ENCODE measurements at regions of chr22 and their contacts with region 1.

Region 1: DNA sequence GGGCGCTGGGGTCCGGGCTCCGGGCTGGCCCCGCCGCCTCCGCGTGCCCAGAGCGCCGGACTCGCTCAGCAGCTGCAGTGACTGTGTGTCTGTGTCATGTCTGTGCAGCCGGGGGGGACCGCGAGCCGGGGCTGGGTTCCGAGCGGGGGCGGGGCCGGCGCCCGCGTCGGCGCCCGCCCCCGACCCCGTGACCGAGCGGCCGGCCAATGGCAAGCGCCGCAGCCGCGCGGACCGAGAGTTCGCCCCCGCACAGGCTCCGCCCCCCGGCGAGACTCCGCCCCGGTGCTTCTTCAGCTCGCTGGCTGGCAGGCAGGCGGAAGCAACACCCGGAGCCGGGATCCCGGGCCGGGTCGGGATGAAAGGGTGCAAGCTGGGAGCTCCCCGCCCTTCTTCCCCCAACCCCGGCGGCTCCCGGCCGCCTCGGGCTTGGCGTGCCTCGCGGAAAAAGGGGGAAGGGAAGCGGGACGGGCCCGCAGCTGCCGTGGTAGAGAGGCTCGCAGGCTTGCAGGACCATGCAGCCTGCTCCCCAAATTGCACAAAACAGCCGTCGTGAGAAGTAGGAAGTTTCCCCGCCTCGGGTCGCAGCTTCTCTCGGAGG is 750 bp upstream of the LARGE1 start:
- DNase-seq: peak; percentile 99
- ATAC-seq: peak; percentile 88 to 94 (median 91)
- H3K4me3 ChIP-seq: peak overlapping the region; percentile 44 to 97 (median 78)
- H3K27ac ChIP-seq: peak overlapping the region; percentile 14 to 92 (median 84)
- H3K4me1 ChIP-seq: peaks cover 0 to 53% (median 28%) of the 10 kb centered on the region in 12 donors
- H3K27me3 ChIP-seq: peaks cover 0 to 28% (median 0%) of the 10 kb centered on the region in 9 donors
- CTCF ChIP-seq: no peak
- POLR2A ChIP-seq: peak; percentile 78 to 97

Region 2: GRCh38 chr22:33519071-33519973 is 401.7 kb before region 1 on chr22:
- intact Hi-C with region 1: loop called (anchors 5 to 10 kb)
- DNase-seq: peak in 4 of 5 donors; percentile 29 to 54 (median 37)
- ATAC-seq: peak; percentile 37 to 69 (median 55)
- H3K4me3 ChIP-seq: no peak overlapping the region
- H3K27ac ChIP-seq: peak overlapping the region in 1 of 12 donors; percentile 19
- H3K4me1 ChIP-seq: peaks cover 0 to 23% (median 11%) of the 10 kb centered on the region in 12 donors
- H3K27me3 ChIP-seq: no peaks in the 10 kb centered on the region
- CTCF ChIP-seq: peak; percentile 38 to 82 (median 70)
- POLR2A ChIP-seq: no peak

Region 3: GRCh38 chr22:33597274-33597985 is 323.6 kb before region 1 on chr22:
- intact Hi-C with region 1: loop called in 2 of 10 experiments (anchors 10 kb)
- DNase-seq: peak in 2 of 5 donors; percentile 38 to 44
- ATAC-seq: peak in 3 of 4 donors; percentile 15 to 63 (median 57)
- H3K4me3 ChIP-seq: no peak overlapping the region
- H3K27ac ChIP-seq: no peak overlapping the region
- H3K4me1 ChIP-seq: peaks cover 0 to 15% (median 1%) of the 10 kb centered on the region in 12 donors
- H3K27me3 ChIP-seq: no peaks in the 10 kb centered on the region
- CTCF ChIP-seq: no peak
- POLR2A ChIP-seq: no peak

Region 4: DNA sequence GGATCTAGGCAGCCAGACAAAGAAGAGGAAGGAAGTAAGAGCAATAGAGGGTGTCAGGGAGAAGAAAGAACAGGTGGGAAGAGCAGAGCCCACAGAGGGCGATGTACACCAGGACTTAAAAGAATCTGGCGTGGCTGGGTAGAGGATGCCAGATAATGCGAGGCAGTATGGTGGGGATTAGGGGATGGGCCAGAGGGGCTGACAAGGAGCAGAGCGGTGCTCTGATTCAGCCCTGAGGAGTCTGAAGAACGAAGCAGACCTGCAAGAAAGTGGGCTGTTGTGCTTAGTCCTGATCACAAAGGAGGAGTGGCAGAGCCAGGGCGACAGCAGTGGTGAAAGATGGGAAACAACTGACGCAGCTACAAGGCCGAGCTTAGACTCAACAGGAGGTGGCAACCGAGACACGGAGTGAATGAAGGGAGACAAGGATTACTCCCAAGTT is 164.5 kb before region 1 on chr22:
- intact Hi-C with region 1: loop called in 2 of 10 experiments (anchors 5 kb)
- DNase-seq: peak in 3 of 5 donors; percentile 35 to 43 (median 37)
- ATAC-seq: peak; percentile 42 to 79 (median 62)
- H3K4me3 ChIP-seq: no peak overlapping the region
- H3K27ac ChIP-seq: peak overlapping the region in 4 of 12 donors; percentile 5 to 54 (median 12)
- H3K4me1 ChIP-seq: peaks cover 0 to 27% (median 7%) of the 10 kb centered on the region in 12 donors
- H3K27me3 ChIP-seq: no peaks in the 10 kb centered on the region
- CTCF ChIP-seq: peak in 2 of 12 donors; percentile 7 to 24
- POLR2A ChIP-seq: no peak

Region 5: GRCh38 chr22:33867115-33867866 is 53.7 kb before region 1 on chr22:
- intact Hi-C with region 1: loop called in 5 of 10 experiments (anchors 2 to 5 kb)
- DNase-seq: peak in 1 of 5 donors; percentile 47
- ATAC-seq: peak in 3 of 4 donors; percentile 52 to 61 (median 54)
- H3K4me3 ChIP-seq: no peak overlapping the region
- H3K27ac ChIP-seq: peak overlapping the region; percentile 53 to 88 (median 84)
- H3K4me1 ChIP-seq: peaks cover 7 to 83% (median 48%) of the 10 kb centered on the region in 12 donors
- H3K27me3 ChIP-seq: no peaks in the 10 kb centered on the region
- CTCF ChIP-seq: peak in 1 of 12 donors; percentile 23
- POLR2A ChIP-seq: no peak

Region 6: GRCh38 chr22:33971561-33971961 is 50.5 kb after region 1 on chr22:
- intact Hi-C with region 1: no loop called
- DNase-seq: no peak
- ATAC-seq: peak in 2 of 4 donors; percentile 41 to 72
- H3K4me3 ChIP-seq: no peak overlapping the region
- H3K27ac ChIP-seq: no peak overlapping the region
- H3K4me1 ChIP-seq: no peaks in the 10 kb centered on the region
- H3K27me3 ChIP-seq: peaks cover 0 to 9% (median 0%) of the 10 kb centered on the region in 9 donors
- CTCF ChIP-seq: no peak
- POLR2A ChIP-seq: no peak

Region 7: GRCh38 chr22:34111210-34111824 is 190.3 kb after region 1 on chr22:
- intact Hi-C with region 1: loop called in 6 of 10 experiments (anchors 2 to 5 kb)
- DNase-seq: peak in 3 of 5 donors; percentile 8 to 26 (median 18)
- ATAC-seq: peak in 3 of 4 donors; percentile 41 to 76 (median 69)
- H3K4me3 ChIP-seq: no peak overlapping the region
- H3K27ac ChIP-seq: no peak overlapping the region
- H3K4me1 ChIP-seq: no peaks in the 10 kb centered on the region
- H3K27me3 ChIP-seq: peaks cover 0 to 10% (median 0%) of the 10 kb centered on the region in 9 donors
- CTCF ChIP-seq: peak; percentile 56 to 75 (median 62)
- POLR2A ChIP-seq: no peak

Region 8: GRCh38 chr22:35023692-35024363 is 1102.8 kb after region 1 on chr22:
- intact Hi-C with region 1: loop called in 4 of 10 experiments (anchors 5 to 10 kb)
- DNase-seq: peak; percentile 49 to 84 (median 52)
- ATAC-seq: peak in 3 of 4 donors; percentile 64 to 76 (median 68)
- H3K4me3 ChIP-seq: no peak overlapping the region
- H3K27ac ChIP-seq: no peak overlapping the region
- H3K4me1 ChIP-seq: peaks cover 0 to 6% (median 0%) of the 10 kb centered on the region in 12 donors
- H3K27me3 ChIP-seq: peaks cover 0 to 30% (median 10%) of the 10 kb centered on the region in 9 donors
- CTCF ChIP-seq: peak; percentile 68 to 92 (median 82)
- POLR2A ChIP-seq: no peak